CD4-positive, alpha-beta memory T cell (primary cell): ENCODE measurements at regions of chr3 and their contacts with region 1.

Region 1: GRCh38 chr3:158644345-158644908 is at the start of gene GFM1:
- DNase-seq: peak; percentile 88 to 93 (median 91)
- H3K4me3 ChIP-seq: peak within 1 kb of the TSS; percentile 69 to 87
- H3K4me3 Mint-ChIP-seq: peak within 1 kb of the TSS; percentile 92 to 100 (median 98)
- H3K27ac ChIP-seq: peak within 1 kb of the TSS; percentile 84
- H3K27ac Mint-ChIP-seq: peak within 1 kb of the TSS; percentile 40 to 98 (median 96)
- H3K4me1 ChIP-seq: peaks cover 34% of the 10 kb centered on the region
- H3K4me1 Mint-ChIP-seq: peaks cover 33 to 59% (median 42%) of the 10 kb centered on the region in 4 donors
- H3K27me3 ChIP-seq: no peaks in the 10 kb centered on the region
- H3K27me3 Mint-ChIP-seq: no peaks in the 10 kb centered on the region
- total RNA-seq, gene GFM1: 42.7 to 44.2 TPM

Region 2: GRCh38 chr3:158109804-158110657 is 534.4 kb before region 1 on chr3 and contains the start of gene RSRC1:
- CTCF ChIA-PET with region 1: interaction called, 3 read pairs
- POLR2A ChIA-PET with region 1: interaction called, 4 read pairs
- intact Hi-C with region 1: loop called (anchors 5 kb)
- DNase-seq: peak; percentile 75 to 84 (median 78)
- H3K4me3 ChIP-seq: peak within 1 kb of the TSS; percentile 59 to 82
- H3K4me3 Mint-ChIP-seq: peak within 1 kb of the TSS; percentile 84 to 100 (median 96)
- H3K27ac ChIP-seq: peak within 1 kb of the TSS; percentile 51
- H3K27ac Mint-ChIP-seq: peak within 1 kb of the TSS; percentile 74 to 98 (median 90)
- H3K4me1 ChIP-seq: peaks cover 50% of the 10 kb centered on the region
- H3K4me1 Mint-ChIP-seq: peaks cover 43 to 78% (median 52%) of the 10 kb centered on the region in 4 donors
- H3K27me3 ChIP-seq: peaks cover 38% of the 10 kb centered on the region
- H3K27me3 Mint-ChIP-seq: peaks cover 29 to 30% of the 10 kb centered on the region in 2 donors
- total RNA-seq, gene RSRC1: 34.1 to 35.7 TPM

Region 3: GRCh38 chr3:158570999-158571974 is 73.1 kb before region 1 on chr3 and contains the start of gene MLF1:
- CTCF ChIA-PET with region 1: interaction called, 14 read pairs
- POLR2A ChIA-PET with region 1: interaction called, 9 read pairs
- intact Hi-C with region 1: loop called (anchors 2 kb)
- DNase-seq: peak; percentile 80 to 83 (median 82)
- H3K4me3 ChIP-seq: peak within 1 kb of the TSS; percentile 1 to 77
- H3K4me3 Mint-ChIP-seq: peak within 1 kb of the TSS; percentile 86 to 93 (median 89)
- H3K27ac ChIP-seq: peak within 1 kb of the TSS; percentile 51
- H3K27ac Mint-ChIP-seq: peak within 1 kb of the TSS; percentile 87 to 96 (median 92)
- H3K4me1 ChIP-seq: peaks cover 14% of the 10 kb centered on the region
- H3K4me1 Mint-ChIP-seq: peaks cover 11 to 16% (median 13%) of the 10 kb centered on the region in 4 donors
- H3K27me3 ChIP-seq: no peaks in the 10 kb centered on the region
- H3K27me3 Mint-ChIP-seq: peaks cover 22 to 43% of the 10 kb centered on the region in 2 donors
- total RNA-seq, gene MLF1: 1.0 to 1.6 TPM

Region 4: GRCh38 chr3:158590223-158590622 is 54.2 kb before region 1 on chr3:
- CTCF ChIA-PET with region 1: no interaction called
- POLR2A ChIA-PET with region 1: no interaction called
- intact Hi-C with region 1: no loop called
- DNase-seq: no peak
- H3K4me3 ChIP-seq: no peak overlapping the region
- H3K4me3 Mint-ChIP-seq: no peak overlapping the region
- H3K27ac ChIP-seq: no peak overlapping the region
- H3K27ac Mint-ChIP-seq: no peak overlapping the region
- H3K4me1 ChIP-seq: no peaks in the 10 kb centered on the region
- H3K4me1 Mint-ChIP-seq: no peaks in the 10 kb centered on the region
- H3K27me3 ChIP-seq: no peaks in the 10 kb centered on the region
- H3K27me3 Mint-ChIP-seq: peaks cover 0 to 3% of the 10 kb centered on the region in 2 donors

Region 5: GRCh38 chr3:158672293-158673176 is 28.1 kb after region 1 on chr3 and contains the start of gene LXN:
- CTCF ChIA-PET with region 1: interaction called, 15 read pairs
- POLR2A ChIA-PET with region 1: interaction called, 10 read pairs
- intact Hi-C with region 1: loop called (anchors 2 kb)
- DNase-seq: peak; percentile 76 to 89 (median 79)
- H3K4me3 ChIP-seq: peak within 1 kb of the TSS; percentile 62 to 64
- H3K4me3 Mint-ChIP-seq: peak within 1 kb of the TSS; percentile 92 to 99 (median 96)
- H3K27ac ChIP-seq: peak within 1 kb of the TSS; percentile 63
- H3K27ac Mint-ChIP-seq: peak within 1 kb of the TSS; percentile 81 to 97 (median 96)
- H3K4me1 ChIP-seq: peaks cover 19% of the 10 kb centered on the region
- H3K4me1 Mint-ChIP-seq: peaks cover 12 to 32% (median 22%) of the 10 kb centered on the region in 4 donors
- H3K27me3 ChIP-seq: no peaks in the 10 kb centered on the region
- H3K27me3 Mint-ChIP-seq: no peaks in the 10 kb centered on the region
- total RNA-seq, gene LXN: 7.7 to 8.1 TPM

Region 6: GRCh38 chr3:160565442-160566403 is 1921.3 kb after region 1 on chr3 and contains the start of gene KPNA4:
- CTCF ChIA-PET with region 1: no interaction called
- POLR2A ChIA-PET with region 1: no interaction called
- intact Hi-C with region 1: loop called (anchors 2 kb)
- DNase-seq: peak; percentile 96 to 97 (median 97)
- H3K4me3 ChIP-seq: peak within 1 kb of the TSS; percentile 40 to 72
- H3K4me3 Mint-ChIP-seq: peak within 1 kb of the TSS; percentile 94 to 99 (median 96)
- H3K27ac ChIP-seq: peak within 1 kb of the TSS; percentile 85
- H3K27ac Mint-ChIP-seq: peak within 1 kb of the TSS; percentile 96 to 99 (median 98)
- H3K4me1 ChIP-seq: peaks cover 48% of the 10 kb centered on the region
- H3K4me1 Mint-ChIP-seq: peaks cover 42 to 62% (median 53%) of the 10 kb centered on the region in 4 donors
- H3K27me3 ChIP-seq: no peaks in the 10 kb centered on the region
- H3K27me3 Mint-ChIP-seq: no peaks in the 10 kb centered on the region
- total RNA-seq, gene KPNA4: 46.1 to 50.1 TPM